Activated T-helper 2 cell treated with anti-CD3 and anti-CD28 coated beads, Interferon-gamma antibody, Interleukin-2, Interleukin-4, amounts not matched to agents 10 μg/mL and 5 μg/mL and 100 μg/mL, durations not matched to agents 14 hours and 24 hours and 36 hours (primary cell): ENCODE measurements at regions of chr2 and their contacts with region 1.

Region 1: GRCh38 chr2:37389989-37390765 is 45.7 kb downstream of the QPCT start:
- DNase-seq: peak; percentile 59
- H3K4me3 Mint-ChIP-seq: peak overlapping the region; percentile 7
- H3K27ac Mint-ChIP-seq: peak overlapping the region; percentile 79
- H3K4me1 Mint-ChIP-seq: peaks cover 20% of the 10 kb centered on the region
- H3K27me3 Mint-ChIP-seq: peaks cover 10% of the 10 kb centered on the region

Region 2: DNA sequence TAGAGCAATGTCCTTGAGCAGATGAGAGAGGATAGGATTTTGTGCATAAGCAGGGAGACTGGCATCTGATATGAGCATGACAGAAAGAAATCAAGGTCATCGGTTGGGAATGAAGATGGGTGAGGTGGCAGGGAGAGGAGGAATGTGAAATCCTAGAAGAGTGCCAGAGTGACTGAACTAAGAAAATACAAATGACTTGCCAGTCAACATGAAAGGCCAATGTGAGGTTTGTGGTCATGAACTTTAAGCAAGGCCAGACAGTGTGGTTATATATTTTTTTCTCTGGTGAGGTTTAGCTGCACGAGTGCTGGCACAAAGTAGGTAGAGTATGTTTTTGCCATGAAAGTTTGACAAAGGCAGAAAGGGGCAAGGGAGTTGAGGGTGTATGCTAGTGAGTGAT is 24.5 kb before region 1 on chr2:
- intact Hi-C with region 1: loop called (anchors 1 kb)
- DNase-seq: no peak
- H3K4me3 Mint-ChIP-seq: no peak overlapping the region
- H3K27ac Mint-ChIP-seq: no peak overlapping the region
- H3K4me1 Mint-ChIP-seq: peaks cover 24% of the 10 kb centered on the region
- H3K27me3 Mint-ChIP-seq: peaks cover 33% of the 10 kb centered on the region

Region 3: GRCh38 chr2:37871456-37872191 is 481.4 kb after region 1 on chr2:
- intact Hi-C with region 1: loop called (anchors 1 kb)
- DNase-seq: no peak
- H3K4me3 Mint-ChIP-seq: peak overlapping the region; percentile 10
- H3K27ac Mint-ChIP-seq: peak overlapping the region; percentile 86
- H3K4me1 Mint-ChIP-seq: peaks cover 34% of the 10 kb centered on the region
- H3K27me3 Mint-ChIP-seq: peaks cover 2% of the 10 kb centered on the region

Region 4: GRCh38 chr2:37890893-37891495 is 500.8 kb after region 1 on chr2:
- intact Hi-C with region 1: loop called (anchors 5 kb)
- DNase-seq: peak; percentile 26
- H3K4me3 Mint-ChIP-seq: no peak overlapping the region
- H3K27ac Mint-ChIP-seq: no peak overlapping the region
- H3K4me1 Mint-ChIP-seq: peaks cover 14% of the 10 kb centered on the region
- H3K27me3 Mint-ChIP-seq: peaks cover 16% of the 10 kb centered on the region